HepG2 (cell line): ENCODE measurements at regions of chr10 and their contacts with region 1.

Region 1: GRCh38 chr10:94362360-94363250 is at the start of gene NOC3L:
- DNase-seq: peak; percentile 93
- ATAC-seq: peak; percentile 98
- H3K4me3 ChIP-seq: peak within 1 kb of the TSS; percentile 74 to 92 (median 77)
- H3K27ac ChIP-seq: peak within 1 kb of the TSS; percentile 57
- H3K4me1 ChIP-seq: peaks cover 22% of the 10 kb centered on the region
- H3K27me3 ChIP-seq: no peaks in the 10 kb centered on the region; a peak in 2 of 5 replicates
- CTCF ChIP-seq: peak; percentile 96
- EP300 ChIP-seq: 0 out of 4 replicates have a peak, but pooled peaks have one; percentile 30 to 44
- POLR2A ChIP-seq: peak; percentile 86 to 87
- RAD21 ChIP-seq: peak; percentile 71; the same call in 1 of the 2 replicates
- total RNA-seq, gene NOC3L: 36.6 and 51.6 TPM in 2 replicates

Region 2: GRCh38 chr10:94320285-94320914 is 42.2 kb before region 1 on chr10:
- CTCF ChIA-PET with region 1: no interaction called
- POLR2A ChIA-PET with region 1: no interaction called
- in situ Hi-C with region 1: no loop called
- intact Hi-C with region 1: no loop called
- DNase-seq: peak; percentile 53
- ATAC-seq: peak; percentile 29; the same call in 1 of the 3 replicates
- H3K4me3 ChIP-seq: no peak overlapping the region
- H3K27ac ChIP-seq: no peak overlapping the region
- H3K4me1 ChIP-seq: peaks cover 11% of the 10 kb centered on the region
- H3K27me3 ChIP-seq: no peaks in the 10 kb centered on the region
- CTCF ChIP-seq: peak; percentile 81
- EP300 ChIP-seq: no peak
- POLR2A ChIP-seq: no peak
- RAD21 ChIP-seq: peak; percentile 63

Region 3: GRCh38 chr10:94402015-94402842 is 39.6 kb after region 1 on chr10 and contains the start of gene TBC1D12:
- CTCF ChIA-PET with region 1: no interaction called
- POLR2A ChIA-PET with region 1: interaction called, 23 read pairs
- in situ Hi-C with region 1: loop called (anchors 5 kb)
- intact Hi-C with region 1: loop called (anchors 1 kb)
- DNase-seq: peak; percentile 93
- ATAC-seq: peak; percentile 84
- H3K4me3 ChIP-seq: peak within 1 kb of the TSS; percentile 92 to 97 (median 95)
- H3K27ac ChIP-seq: peak within 1 kb of the TSS; percentile 92
- H3K4me1 ChIP-seq: peaks cover 55% of the 10 kb centered on the region
- H3K27me3 ChIP-seq: no peaks in the 10 kb centered on the region; a peak in 1 of 5 replicates
- CTCF ChIP-seq: peak; percentile 34
- EP300 ChIP-seq: peak in 1 of 2 experiments; percentile 27; a peak in 1 of 4 replicates
- POLR2A ChIP-seq: peak; percentile 70 to 80
- RAD21 ChIP-seq: no peak
- total RNA-seq, gene TBC1D12: 6.2 and 7.2 TPM in 2 replicates